SK-N-SH (cell line): ENCODE measurements at regions of chr2 and their contacts with region 1.

Region 1: DNA sequence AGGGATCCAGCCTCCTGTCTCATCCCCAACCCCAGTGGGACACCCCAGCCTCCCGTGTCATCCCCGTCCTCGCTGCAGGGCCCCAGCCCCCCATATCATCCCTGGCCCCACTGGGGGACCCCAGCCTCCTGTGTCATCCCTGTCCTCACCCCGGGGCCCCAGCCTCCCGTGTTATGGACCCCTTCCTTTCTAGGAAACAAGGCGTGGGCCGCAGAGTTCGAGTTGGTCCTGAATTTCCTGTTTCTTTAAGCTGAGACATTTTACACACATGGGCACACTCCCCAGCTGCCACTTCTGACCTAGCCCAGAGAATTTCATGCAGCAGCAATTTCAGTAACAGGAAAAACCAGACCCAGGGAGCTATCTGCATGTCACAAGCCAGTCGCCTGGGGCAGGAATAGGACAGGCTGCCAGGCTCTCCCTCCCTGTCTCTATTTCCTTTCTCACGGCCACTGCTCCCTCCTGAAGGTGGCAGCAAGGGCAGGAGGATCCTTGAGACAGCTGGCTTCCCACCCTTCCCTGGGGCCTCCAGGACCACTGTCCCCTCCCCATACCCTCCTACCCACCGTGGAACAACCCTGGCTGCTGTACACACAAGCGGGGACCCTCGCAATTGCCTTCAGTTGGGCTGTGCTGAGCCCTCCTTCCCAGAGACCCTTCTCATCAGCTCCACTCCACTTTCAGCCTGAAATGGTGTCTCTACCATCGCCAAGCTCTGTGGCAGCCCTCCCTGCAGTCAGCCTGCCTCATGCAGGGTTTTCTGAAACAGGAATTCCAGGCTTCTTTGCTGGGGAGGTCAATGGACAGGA is 141.9 kb upstream of the ID2 start:
- DNase-seq: peak; percentile 93
- H3K4me3 ChIP-seq: no peak overlapping the region
- H3K27ac ChIP-seq: peak overlapping the region in 1 of 2 experiments; percentile 79; a peak in 2 of 4 replicates
- H3K4me1 ChIP-seq: peaks cover 16 to 95% of the 10 kb centered on the region in 2 experiments
- H3K27me3 ChIP-seq: no peaks in the 10 kb centered on the region
- CTCF ChIP-seq: no peak
- EP300 ChIP-seq: peak in 1 of 2 experiments; percentile 95; a peak in 2 of 4 replicates
- RAD21 ChIP-seq: peak; percentile 54; the same call in 1 of the 2 replicates

Region 2: DNA sequence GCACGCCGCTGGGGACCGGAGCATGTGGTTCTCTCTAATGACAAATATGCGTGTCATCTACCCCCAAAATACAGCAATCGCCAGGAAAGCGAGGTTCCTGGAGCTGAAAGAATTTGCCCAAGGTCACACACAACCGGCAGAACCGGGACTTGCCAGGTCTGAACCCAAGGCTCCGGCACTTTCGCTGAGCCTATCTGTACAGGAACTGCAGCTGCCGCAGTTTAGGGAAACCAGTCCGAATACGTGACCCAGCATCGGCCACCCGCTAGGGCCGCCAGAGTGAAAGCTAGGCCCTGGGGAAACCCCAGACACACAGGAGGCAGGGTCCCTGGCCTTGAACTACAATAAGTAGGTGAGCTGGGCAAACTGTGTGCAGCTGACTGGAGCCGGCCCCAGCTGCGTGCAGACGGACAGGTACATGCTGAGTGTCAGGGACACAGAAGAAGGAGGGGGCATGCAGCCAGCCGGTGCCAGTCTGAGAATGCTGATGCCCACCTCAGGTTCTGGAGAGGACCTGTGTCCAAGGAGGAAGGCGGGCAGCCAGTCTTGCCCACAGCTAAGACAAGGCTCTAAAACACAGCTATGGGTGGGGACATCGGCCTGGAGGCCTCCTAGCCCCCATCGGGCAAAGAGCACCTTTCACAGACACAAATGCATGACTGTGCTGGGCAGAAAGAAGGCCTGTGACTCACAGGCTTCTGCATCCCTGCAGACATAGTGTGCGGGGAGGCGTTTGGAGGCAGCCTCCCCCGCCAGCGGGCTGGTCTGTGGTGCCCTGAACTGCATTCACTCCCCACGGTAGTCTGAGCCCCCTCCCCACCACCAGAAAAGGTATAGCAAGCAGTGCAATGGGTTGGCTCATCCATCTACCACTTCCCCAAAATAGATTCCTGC is 34.4 kb after region 1 on chr2:
- CTCF ChIA-PET with region 1: interaction called, 5 read pairs
- POLR2A ChIA-PET with region 1: interaction called, 13 read pairs
- DNase-seq: no peak
- H3K4me3 ChIP-seq: no peak overlapping the region
- H3K27ac ChIP-seq: peak overlapping the region in 1 of 2 experiments; percentile 67; a peak in 2 of 4 replicates
- H3K4me1 ChIP-seq: peaks cover 0 to 38% of the 10 kb centered on the region in 2 experiments; a peak in 2 of 4 replicates
- H3K27me3 ChIP-seq: no peaks in the 10 kb centered on the region
- CTCF ChIP-seq: no peak
- EP300 ChIP-seq: no peak
- RAD21 ChIP-seq: no peak

Region 3: GRCh38 chr2:8710951-8711350 is 171.0 kb after region 1 on chr2:
- CTCF ChIA-PET with region 1: no interaction called
- POLR2A ChIA-PET with region 1: no interaction called
- DNase-seq: no peak
- H3K4me3 ChIP-seq: no peak overlapping the region
- H3K27ac ChIP-seq: no peak overlapping the region
- H3K4me1 ChIP-seq: no peaks in the 10 kb centered on the region; a peak in 1 of 4 replicates
- H3K27me3 ChIP-seq: no peaks in the 10 kb centered on the region
- CTCF ChIP-seq: no peak
- EP300 ChIP-seq: no peak
- RAD21 ChIP-seq: no peak